ENCODE measurements at regions of chr22 and their contacts with region 1.

Region 1: DNA sequence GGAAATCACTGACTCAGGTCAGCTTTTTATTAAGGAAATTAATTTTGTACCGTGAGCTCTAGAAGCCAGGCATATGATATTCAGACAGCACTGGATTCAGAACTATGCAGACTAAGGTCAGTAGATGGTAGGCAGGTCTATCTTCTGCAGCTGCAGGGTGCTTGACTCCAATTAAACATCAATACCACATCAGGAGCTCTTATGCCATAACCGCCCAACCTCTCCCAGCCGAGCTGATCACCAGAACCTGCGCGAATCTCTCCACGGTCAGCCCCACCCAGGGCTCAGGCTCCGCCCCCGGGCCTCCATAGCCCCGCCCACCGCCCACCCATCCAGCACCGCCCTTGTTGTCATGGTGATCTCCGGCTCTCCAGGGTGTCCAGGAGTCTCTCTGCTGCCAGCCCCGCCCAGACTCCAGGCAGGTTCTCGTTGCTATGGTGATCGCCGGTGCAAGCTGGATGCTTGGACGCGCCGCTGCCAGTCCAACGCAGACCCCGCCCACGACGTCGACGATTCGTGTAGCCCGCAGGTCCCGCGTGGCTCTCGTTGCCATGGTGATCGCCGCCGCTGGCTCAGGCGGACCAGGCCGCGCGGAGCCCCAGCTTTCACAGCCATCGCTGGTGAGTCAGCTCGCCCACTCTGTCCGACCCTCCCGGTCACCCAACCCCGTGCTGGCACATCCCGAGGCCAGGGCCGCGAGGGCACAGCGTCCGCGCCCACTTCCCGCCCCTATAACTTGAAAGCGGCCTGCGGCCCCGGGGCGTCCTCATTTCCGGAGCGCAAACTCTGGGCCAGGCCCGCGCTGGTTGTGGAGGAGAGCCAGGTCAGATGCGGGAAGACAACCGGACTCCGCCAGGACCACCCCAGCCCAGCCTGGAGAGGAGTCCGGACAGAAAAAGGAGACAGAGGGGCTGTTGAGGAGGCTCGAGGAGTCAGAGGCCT is at the start of gene RAB36:
- DNase-seq: peak; percentile 93
- ATAC-seq: peak; percentile 60
- H3K4me3 Mint-ChIP-seq: peak within 1 kb of the TSS; percentile 49
- H3K27ac Mint-ChIP-seq: no peak within 1 kb of the TSS
- H3K4me1 Mint-ChIP-seq: peaks cover 41% of the 10 kb centered on the region
- H3K27me3 Mint-ChIP-seq: no peaks in the 10 kb centered on the region
- total RNA-seq, gene RAB36: 0.35 to 0.50 TPM

Region 2: DNA sequence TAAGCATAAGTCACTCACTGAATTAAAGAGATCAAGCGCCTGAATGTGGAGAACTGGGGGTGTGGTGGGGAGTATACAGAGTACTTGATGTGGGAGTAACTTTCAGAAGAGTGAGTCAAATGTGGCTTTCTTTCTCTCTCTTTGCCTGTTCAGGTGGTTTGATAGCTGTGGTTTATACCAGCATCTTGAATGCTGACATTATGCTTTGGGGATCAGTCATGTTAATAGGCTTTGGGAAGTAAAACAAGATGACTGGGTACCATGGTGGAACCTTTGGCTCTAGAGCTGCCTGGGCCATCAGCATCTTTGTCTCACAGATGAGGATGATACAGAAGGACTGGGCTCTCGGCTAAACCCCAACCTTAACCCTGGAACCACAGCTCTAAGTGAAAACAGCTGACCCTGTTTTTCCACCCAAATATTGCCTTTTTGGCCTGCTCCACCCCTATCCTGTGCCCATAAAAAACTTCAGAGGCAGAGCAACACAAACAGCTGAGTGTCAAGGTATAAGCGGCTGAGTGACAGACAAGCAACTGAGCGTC is 133.1 kb before region 1 on chr22:
- CTCF ChIA-PET with region 1: no interaction called
- POLR2A ChIA-PET with region 1: no interaction called
- intact Hi-C with region 1: loop called in 1 of 2 experiments (anchors 1 kb)
- DNase-seq: peak; percentile 72
- ATAC-seq: peak; percentile 93
- H3K4me3 Mint-ChIP-seq: no peak overlapping the region
- H3K27ac Mint-ChIP-seq: peak overlapping the region; percentile 45
- H3K4me1 Mint-ChIP-seq: peaks cover 30% of the 10 kb centered on the region
- H3K27me3 Mint-ChIP-seq: peaks cover 51% of the 10 kb centered on the region

Region 3: GRCh38 chr22:23112472-23113012 is 32.7 kb before region 1 on chr22:
- CTCF ChIA-PET with region 1: interaction called, 3 read pairs
- POLR2A ChIA-PET with region 1: interaction called, 11 read pairs
- intact Hi-C with region 1: no loop called
- DNase-seq: no peak
- ATAC-seq: no peak
- H3K4me3 Mint-ChIP-seq: no peak overlapping the region
- H3K27ac Mint-ChIP-seq: no peak overlapping the region
- H3K4me1 Mint-ChIP-seq: no peaks in the 10 kb centered on the region
- H3K27me3 Mint-ChIP-seq: no peaks in the 10 kb centered on the region

Region 4: GRCh38 chr22:23178512-23179254 is 33.5 kb after region 1 on chr22:
- CTCF ChIA-PET with region 1: interaction called, 6 read pairs
- POLR2A ChIA-PET with region 1: interaction called, 13 read pairs
- intact Hi-C with region 1: loop called in 1 of 2 experiments (anchors 1 kb)
- DNase-seq: peak; percentile 77
- ATAC-seq: no peak
- H3K4me3 Mint-ChIP-seq: peak overlapping the region; percentile 58
- H3K27ac Mint-ChIP-seq: no peak overlapping the region
- H3K4me1 Mint-ChIP-seq: peaks cover 39% of the 10 kb centered on the region
- H3K27me3 Mint-ChIP-seq: no peaks in the 10 kb centered on the region

Region 5: GRCh38 chr22:23240639-23241389 is 95.6 kb after region 1 on chr22:
- CTCF ChIA-PET with region 1: interaction called, 5 read pairs
- POLR2A ChIA-PET with region 1: interaction called, 3 read pairs
- intact Hi-C with region 1: loop called in 1 of 2 experiments (anchors 1 kb)
- DNase-seq: peak; percentile 72
- ATAC-seq: peak; percentile 34
- H3K4me3 Mint-ChIP-seq: no peak overlapping the region
- H3K27ac Mint-ChIP-seq: peak overlapping the region; percentile 84
- H3K4me1 Mint-ChIP-seq: peaks cover 93% of the 10 kb centered on the region
- H3K27me3 Mint-ChIP-seq: no peaks in the 10 kb centered on the region

Region 6: GRCh38 chr22:23709107-23709506 is 563.9 kb after region 1 on chr22:
- CTCF ChIA-PET with region 1: no interaction called
- POLR2A ChIA-PET with region 1: no interaction called
- intact Hi-C with region 1: loop called in 1 of 2 experiments (anchors 5 kb)
- DNase-seq: no peak
- ATAC-seq: no peak
- H3K4me3 Mint-ChIP-seq: no peak overlapping the region
- H3K27ac Mint-ChIP-seq: peak overlapping the region; percentile 68
- H3K4me1 Mint-ChIP-seq: peaks cover 64% of the 10 kb centered on the region
- H3K27me3 Mint-ChIP-seq: no peaks in the 10 kb centered on the region